AG04450 (cell line): ENCODE measurements at regions of chr13 and their contacts with region 1.

Region 1: GRCh38 chr13:84303035-84303434 is 420.8 kb upstream of the SLITRK1 start:
- DNase-seq: no peak
- H3K4me3 ChIP-seq: no peak overlapping the region
- H3K27ac ChIP-seq: no peak overlapping the region
- H3K27me3 ChIP-seq: no peaks in the 10 kb centered on the region
- CTCF ChIP-seq: no peak

Region 2: GRCh38 chr13:84200971-84201370 is 102.1 kb before region 1 on chr13:
- CTCF ChIA-PET with region 1: no interaction called
- POLR2A ChIA-PET with region 1: no interaction called
- DNase-seq: no peak
- H3K4me3 ChIP-seq: no peak overlapping the region
- H3K27ac ChIP-seq: no peak overlapping the region
- H3K27me3 ChIP-seq: no peaks in the 10 kb centered on the region
- CTCF ChIP-seq: no peak

Region 3: DNA sequence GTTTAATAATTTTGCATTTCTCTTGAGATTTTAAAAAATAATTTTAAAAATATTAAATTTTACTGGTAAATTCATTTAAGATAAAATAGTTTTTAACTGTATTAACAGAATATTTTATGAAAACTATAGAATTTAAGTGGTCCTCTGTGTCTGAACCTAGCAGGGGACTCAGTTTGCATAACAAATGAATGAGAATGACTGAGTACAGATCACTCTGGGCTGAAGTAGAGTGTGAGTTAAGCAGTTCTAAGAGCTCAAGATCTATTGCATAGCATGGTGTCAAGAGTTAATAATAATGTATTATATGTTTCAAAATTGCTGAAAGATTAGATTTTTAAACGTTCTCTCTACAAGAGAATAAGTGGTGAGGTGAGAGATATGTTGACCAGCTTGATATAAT is 72.5 kb before region 1 on chr13:
- CTCF ChIA-PET with region 1: no interaction called
- POLR2A ChIA-PET with region 1: no interaction called
- DNase-seq: no peak
- H3K4me3 ChIP-seq: no peak overlapping the region
- H3K27ac ChIP-seq: no peak overlapping the region
- H3K27me3 ChIP-seq: no peaks in the 10 kb centered on the region
- CTCF ChIP-seq: no peak

Region 4: DNA sequence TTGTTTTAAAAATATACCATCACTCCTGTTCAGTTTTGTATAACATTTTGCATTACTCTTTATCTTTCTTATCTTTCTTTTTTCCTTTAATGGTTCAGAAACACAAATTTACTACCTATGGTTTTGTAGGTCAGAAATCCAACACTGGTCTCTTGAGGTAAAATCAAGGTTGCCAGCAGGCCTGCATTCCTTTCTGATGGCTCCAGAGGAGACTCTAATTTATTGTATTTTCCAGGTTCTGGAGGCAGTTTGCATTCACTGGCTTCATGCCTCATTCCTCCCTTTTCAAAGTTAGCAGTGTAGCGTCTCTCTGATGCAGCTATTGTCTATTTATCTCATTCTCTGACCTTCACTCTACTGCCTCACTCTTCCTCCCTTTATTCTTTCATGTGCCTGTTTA is 728.7 kb after region 1 on chr13:
- CTCF ChIA-PET with region 1: interaction called, 10 read pairs
- POLR2A ChIA-PET with region 1: no interaction called
- DNase-seq: no peak
- H3K4me3 ChIP-seq: no peak overlapping the region
- H3K27ac ChIP-seq: no peak overlapping the region
- H3K27me3 ChIP-seq: no peaks in the 10 kb centered on the region
- CTCF ChIP-seq: no peak